BJ (cell line): ENCODE measurements at regions of chr17 and their contacts with region 1.

Region 1: GRCh38 chr17:81959362-81960129 is 1.4 kb downstream of the NOTUM start:
- DNase-seq: no peak
- H3K4me3 ChIP-seq: peak overlapping the region; percentile 23; the same call in 1 of the 2 replicates
- H3K27me3 ChIP-seq: peaks cover 22% of the 10 kb centered on the region
- CTCF ChIP-seq: peak; percentile 27; the same call in 1 of the 2 replicates

Region 2: DNA sequence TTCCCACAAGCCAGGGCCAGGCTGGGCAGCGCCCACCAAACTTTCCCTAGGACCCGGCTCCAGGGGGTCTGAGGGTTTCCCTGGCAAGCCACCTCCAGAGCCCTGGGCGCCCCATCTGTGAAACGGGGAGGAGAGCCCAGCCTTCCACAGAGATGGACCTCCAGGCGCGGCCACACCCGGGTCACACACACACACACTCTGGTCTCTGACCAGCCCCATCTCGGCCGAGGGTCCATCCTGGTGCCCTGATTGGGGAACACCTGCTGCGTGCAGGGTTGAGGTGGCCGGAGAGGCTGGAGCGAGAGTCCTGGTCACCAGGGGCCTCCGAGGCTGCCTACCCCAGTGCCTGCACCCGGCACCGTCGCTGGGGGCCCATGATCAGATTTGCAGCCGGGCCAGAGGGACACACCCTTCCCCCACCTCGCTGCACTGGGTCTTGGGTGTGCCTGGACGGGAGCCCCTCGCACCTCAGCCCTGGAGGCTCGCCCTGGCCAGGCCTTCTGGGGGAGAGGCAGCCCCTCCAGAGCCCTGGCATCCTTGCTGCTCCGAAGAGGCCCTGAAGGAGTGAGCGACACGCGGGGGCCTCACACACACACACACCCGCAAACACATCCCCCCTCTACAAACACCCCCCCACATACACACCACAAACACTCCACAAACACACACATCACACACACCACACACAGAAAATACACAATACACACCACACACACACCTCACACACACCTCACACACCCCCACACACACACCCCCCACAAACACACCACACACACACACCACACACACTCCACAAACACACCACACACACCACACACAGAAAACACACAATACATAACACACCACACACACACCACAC is 217.7 kb before region 1 on chr17:
- CTCF ChIA-PET with region 1: no interaction called
- POLR2A ChIA-PET with region 1: no interaction called
- DNase-seq: no peak
- H3K4me3 ChIP-seq: no peak overlapping the region
- H3K27me3 ChIP-seq: peaks cover 5% of the 10 kb centered on the region
- CTCF ChIP-seq: no peak

Region 3: DNA sequence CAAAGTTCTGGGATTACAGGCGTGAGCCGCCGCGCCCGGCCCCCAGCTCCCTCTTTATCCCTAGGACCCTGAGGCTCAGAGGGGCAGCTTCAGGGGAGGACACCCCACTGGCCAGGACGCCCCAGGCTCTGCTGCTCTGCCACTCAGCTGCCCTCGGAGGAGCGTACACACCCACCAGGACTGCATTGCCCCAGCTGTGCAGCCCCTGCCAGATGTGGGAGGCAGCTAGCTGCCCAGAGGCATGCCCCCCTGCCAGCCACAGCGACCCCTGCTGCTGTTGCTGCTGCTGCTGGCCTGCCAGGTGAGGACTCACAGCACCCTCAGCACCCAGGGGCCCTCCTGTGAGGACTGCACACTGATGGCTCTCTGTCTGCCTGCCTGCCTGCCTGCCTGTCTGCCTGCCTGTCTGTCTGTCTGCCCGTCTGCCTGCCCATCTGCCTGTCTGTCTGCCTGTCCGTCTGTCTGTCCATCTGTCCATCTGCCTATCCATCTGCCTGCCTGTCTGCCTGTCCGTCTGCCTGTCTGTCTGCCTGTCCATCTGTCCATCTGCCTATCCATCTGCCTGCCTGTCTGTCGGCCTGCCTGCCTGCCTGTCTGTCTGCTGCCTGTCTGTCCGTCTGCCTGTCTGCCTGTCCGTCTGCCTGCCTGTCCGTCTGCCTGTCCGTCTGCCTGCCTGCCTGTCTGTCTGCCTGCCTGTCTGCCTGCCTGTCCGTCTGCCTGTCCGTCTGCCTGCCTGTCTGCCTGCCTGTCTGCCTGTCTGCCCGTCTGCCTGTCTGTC is 150.6 kb before region 1 on chr17:
- CTCF ChIA-PET with region 1: no interaction called
- POLR2A ChIA-PET with region 1: no interaction called
- DNase-seq: no peak
- H3K4me3 ChIP-seq: no peak overlapping the region
- H3K27me3 ChIP-seq: peaks cover 20% of the 10 kb centered on the region
- CTCF ChIP-seq: 0 out of 2 replicates have a peak, but pooled peaks have one; percentile 10

Region 4: DNA sequence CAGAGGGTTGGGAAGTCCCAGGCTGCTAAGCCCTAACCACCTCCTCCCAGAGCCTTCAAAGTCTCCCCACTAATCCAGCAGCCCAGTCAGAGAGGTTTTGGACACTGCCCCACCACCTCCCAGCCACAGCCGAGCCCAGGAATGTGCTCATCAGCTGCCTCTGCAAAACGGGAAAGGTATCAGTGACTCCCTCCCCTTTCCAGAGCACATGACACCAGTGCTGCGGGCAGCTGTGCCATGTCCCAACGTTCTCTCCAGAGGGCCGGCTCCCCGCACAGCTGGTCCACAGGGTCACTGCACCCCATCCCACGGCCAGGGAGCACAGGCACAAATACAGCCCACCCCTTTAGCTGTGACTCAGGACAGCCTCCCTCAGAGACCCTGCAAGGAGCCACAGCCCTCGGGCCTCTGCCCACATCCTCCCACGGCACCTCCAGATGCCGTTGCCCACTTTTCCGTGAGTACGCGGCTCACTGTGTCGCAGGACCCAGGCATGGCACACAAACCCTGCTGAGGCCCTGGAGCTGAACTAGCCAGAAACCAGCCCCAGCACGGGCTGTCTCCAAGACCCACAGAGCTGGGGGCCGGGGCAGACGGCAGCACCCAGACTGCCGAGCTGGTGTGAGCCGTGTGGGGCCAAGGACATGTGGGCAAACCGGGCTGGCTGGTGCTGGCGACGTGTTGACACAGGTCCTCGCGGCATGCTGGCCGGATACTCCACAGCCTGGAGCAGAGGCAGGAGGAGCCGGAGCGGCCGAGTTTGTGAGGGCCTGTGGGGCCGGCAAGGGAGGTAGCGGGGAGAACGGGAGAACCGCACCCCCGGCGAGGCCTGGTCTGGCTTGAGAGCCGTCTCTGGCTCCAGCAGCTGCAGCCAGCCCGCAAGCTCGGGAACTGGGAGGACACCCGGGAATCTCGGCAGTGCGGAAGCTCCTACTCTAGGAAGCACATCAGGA is 118.4 kb before region 1 on chr17:
- CTCF ChIA-PET with region 1: no interaction called
- POLR2A ChIA-PET with region 1: no interaction called
- DNase-seq: no peak
- H3K4me3 ChIP-seq: no peak overlapping the region
- H3K27me3 ChIP-seq: no peaks in the 10 kb centered on the region
- CTCF ChIP-seq: no peak

Region 5: DNA sequence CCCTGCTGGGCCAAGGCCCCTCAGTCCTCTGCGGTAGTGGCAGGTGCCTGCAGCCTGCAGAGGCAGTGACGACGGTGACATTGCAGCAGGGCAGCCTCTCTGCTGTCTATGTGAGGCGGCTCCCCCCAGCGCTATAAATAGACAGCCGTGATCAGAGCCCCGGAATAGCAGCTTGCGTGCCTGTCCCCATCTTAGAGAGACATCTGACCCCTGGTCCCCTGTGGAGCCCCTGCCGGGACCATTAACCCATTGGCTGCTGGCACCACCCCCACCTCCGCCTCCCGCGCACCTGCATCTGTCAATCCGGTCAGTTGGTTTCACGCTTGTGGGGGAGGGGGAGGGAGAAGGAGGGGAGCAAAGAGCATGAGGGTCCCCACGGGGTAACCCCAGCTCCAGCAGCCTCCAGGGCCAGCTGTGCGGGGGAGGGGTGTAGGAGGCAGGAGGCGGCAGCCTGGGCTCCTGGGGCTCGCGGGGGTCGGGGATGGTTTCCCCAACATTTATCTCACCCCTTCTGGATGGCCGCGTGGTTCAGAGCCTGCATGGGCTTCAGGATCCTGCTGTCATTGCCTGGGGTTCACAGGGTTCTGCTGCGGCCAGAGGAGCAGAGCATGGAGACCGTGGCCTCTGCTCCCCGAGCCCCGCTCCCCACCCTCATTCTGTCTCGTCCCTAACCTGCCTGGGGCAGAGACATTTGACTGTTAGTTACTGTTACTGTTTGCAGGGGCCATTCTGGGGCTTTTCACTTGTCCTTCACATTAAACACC is 17.6 kb before region 1 on chr17:
- CTCF ChIA-PET with region 1: interaction called, 17 read pairs
- POLR2A ChIA-PET with region 1: no interaction called
- DNase-seq: no peak
- H3K4me3 ChIP-seq: no peak overlapping the region
- H3K27me3 ChIP-seq: peaks cover 6% of the 10 kb centered on the region; the same call in 1 of the 2 replicates
- CTCF ChIP-seq: no peak

Region 6: GRCh38 chr17:81977211-81978027 is 17.9 kb after region 1 on chr17 and contains the start of gene ASPSCR1:
- CTCF ChIA-PET with region 1: interaction called, 10 read pairs
- POLR2A ChIA-PET with region 1: no interaction called
- DNase-seq: peak; percentile 26
- H3K4me3 ChIP-seq: peak within 1 kb of the TSS; percentile 84
- H3K27me3 ChIP-seq: no peaks in the 10 kb centered on the region
- CTCF ChIP-seq: no peak
- polyA plus RNA-seq, gene ASPSCR1: 12.0 and 15.4 TPM in 2 replicates

Region 7: GRCh38 chr17:82003411-82004381 is 44.1 kb after region 1 on chr17:
- CTCF ChIA-PET with region 1: interaction called, 19 read pairs
- POLR2A ChIA-PET with region 1: no interaction called
- DNase-seq: peak; percentile 87
- H3K4me3 ChIP-seq: no peak overlapping the region
- H3K27me3 ChIP-seq: no peaks in the 10 kb centered on the region
- CTCF ChIP-seq: peak; percentile 15; the same call in 1 of the 2 replicates

Region 8: DNA sequence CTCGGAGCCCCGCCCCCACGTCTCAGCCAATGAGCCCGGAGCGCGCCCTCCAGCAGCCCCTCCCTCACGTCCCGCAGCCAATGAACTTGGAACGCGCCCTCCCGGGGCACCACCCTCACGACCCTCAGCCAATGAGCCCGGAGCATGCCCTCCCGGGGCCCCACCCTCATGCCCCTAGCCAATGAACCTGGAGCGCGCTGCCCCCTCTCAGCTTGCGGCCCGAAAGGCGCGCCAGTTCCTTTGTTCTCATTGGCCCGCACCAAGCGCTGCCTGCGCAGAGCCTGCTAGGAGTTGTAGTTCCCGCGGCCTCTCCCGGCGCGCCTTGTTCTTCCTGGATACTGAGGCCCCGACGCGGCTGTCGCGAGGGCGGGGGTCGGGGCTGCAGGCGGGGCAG is 63.4 kb after region 1 on chr17 and contains the start of gene LRRC45:
- CTCF ChIA-PET with region 1: interaction called, 218 read pairs
- POLR2A ChIA-PET with region 1: no interaction called
- DNase-seq: peak; percentile 96
- H3K4me3 ChIP-seq: peak within 1 kb of the TSS; percentile 87
- H3K27me3 ChIP-seq: no peaks in the 10 kb centered on the region
- CTCF ChIP-seq: no peak
- polyA plus RNA-seq, gene LRRC45: 4.1 and 6.0 TPM in 2 replicates

Region 9: GRCh38 chr17:82037113-82037888 is 77.8 kb after region 1 on chr17 and contains the start of gene DCXR:
- CTCF ChIA-PET with region 1: interaction called, 15 read pairs
- POLR2A ChIA-PET with region 1: no interaction called
- DNase-seq: peak; percentile 63
- H3K4me3 ChIP-seq: peak within 1 kb of the TSS; percentile 64
- H3K27me3 ChIP-seq: no peaks in the 10 kb centered on the region
- CTCF ChIP-seq: peak; percentile 53
- polyA plus RNA-seq, gene DCXR: 42.7 and 66.0 TPM in 2 replicates